ENCODE measurements at regions of chr17 and their contacts with region 1.

Region 1: DNA sequence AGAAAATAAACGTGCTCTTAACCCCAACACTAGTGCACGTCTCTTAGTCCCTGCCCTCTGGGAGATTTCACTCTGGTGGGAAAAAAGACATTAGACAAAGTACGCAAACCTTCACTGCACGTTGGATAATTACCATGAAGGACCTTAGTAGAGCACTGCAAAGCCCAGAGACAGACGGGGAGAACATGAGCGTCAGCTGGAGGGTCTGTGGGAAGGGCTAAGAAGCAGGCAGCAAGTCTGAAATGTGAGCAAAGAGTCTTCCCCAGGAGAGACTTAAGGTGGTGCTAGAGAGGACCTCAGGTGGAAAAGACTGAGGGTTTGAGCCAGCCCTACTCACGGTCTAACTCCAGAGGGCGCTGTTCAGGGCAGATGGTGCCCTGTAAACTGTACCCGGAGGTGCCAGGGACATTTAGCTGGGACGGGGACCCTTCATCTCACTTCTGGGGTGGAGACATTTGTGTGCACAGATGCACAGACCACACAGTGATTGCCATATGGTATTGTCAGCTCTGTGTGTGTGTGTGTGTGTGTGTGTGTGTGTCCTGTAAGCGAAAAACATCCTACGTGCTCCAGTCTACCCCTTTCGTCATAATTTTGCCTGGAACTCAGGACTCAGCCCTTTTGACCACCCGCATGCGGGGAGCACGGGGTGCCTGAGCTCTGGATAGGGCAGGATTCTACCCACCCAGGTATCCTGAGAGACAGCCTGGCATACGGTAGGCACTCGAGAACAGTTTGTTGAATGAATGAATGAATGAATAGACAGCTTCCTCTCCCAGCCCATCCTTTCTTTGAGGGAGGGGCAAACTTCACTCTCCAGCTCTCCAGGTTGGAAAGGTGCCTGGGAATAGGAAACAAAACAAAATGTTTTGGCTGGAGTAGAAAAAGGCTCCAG is 10.1 kb upstream of the STAC2 start:
- DNase-seq: peak; percentile 79
- ATAC-seq: peak; percentile 85
- H3K4me3 Mint-ChIP-seq: peak overlapping the region; percentile 35; the same call in 1 of the 2 replicates
- H3K27ac Mint-ChIP-seq: peak overlapping the region; percentile 80; the same call in 1 of the 2 replicates
- H3K4me1 Mint-ChIP-seq: peaks cover 25% of the 10 kb centered on the region
- H3K27me3 Mint-ChIP-seq: peaks cover 6% of the 10 kb centered on the region; the same call in 1 of the 2 replicates
- CTCF ChIP-seq: peak; percentile 94

Region 2: DNA sequence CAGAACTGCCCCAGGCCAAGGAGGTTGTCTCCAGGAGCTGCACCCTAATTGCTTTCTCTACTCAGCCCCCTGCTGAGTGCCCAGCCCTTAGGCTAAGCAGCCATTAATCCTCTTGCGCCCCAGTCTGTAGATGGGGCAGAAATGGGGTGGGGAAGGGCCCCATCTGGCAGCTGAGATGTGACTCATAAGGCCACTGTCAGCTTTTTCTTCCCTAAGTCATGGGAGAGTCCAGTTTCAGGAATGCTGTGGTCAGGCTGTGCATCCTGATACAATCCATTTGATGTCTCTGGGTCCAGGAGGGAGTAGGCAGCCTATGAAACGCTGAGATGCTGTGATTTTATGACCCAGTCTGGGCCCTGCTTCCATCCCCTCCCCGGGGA is 96.7 kb before region 1 on chr17:
- CTCF ChIA-PET with region 1: no interaction called
- POLR2A ChIA-PET with region 1: no interaction called
- DNase-seq: no peak
- ATAC-seq: no peak
- H3K4me3 Mint-ChIP-seq: no peak overlapping the region
- H3K27ac Mint-ChIP-seq: no peak overlapping the region
- H3K4me1 Mint-ChIP-seq: no peaks in the 10 kb centered on the region; the same call in 1 of the 2 replicates
- H3K27me3 Mint-ChIP-seq: no peaks in the 10 kb centered on the region; the same call in 1 of the 2 replicates
- CTCF ChIP-seq: no peak

Region 3: DNA sequence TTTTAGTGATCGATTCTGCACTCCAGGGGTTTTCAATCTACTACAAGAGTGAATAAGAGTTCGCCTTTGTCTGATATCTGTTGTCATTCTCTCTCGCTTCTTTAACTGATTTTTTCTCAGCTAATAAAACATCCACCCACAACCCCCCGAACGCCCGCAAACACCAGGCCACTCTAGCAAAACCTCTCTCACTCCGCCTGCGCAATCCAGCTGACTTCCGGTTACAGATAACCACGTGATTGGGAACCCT is 36.1 kb before region 1 on chr17:
- CTCF ChIA-PET with region 1: interaction called, 626 read pairs
- POLR2A ChIA-PET with region 1: interaction called, 5 read pairs
- DNase-seq: peak; percentile 83
- ATAC-seq: peak; percentile 25
- H3K4me3 Mint-ChIP-seq: peak overlapping the region; percentile 98
- H3K27ac Mint-ChIP-seq: peak overlapping the region; percentile 100
- H3K4me1 Mint-ChIP-seq: peaks cover 48% of the 10 kb centered on the region
- H3K27me3 Mint-ChIP-seq: no peaks in the 10 kb centered on the region; the same call in 1 of the 2 replicates
- CTCF ChIP-seq: no peak

Region 4: DNA sequence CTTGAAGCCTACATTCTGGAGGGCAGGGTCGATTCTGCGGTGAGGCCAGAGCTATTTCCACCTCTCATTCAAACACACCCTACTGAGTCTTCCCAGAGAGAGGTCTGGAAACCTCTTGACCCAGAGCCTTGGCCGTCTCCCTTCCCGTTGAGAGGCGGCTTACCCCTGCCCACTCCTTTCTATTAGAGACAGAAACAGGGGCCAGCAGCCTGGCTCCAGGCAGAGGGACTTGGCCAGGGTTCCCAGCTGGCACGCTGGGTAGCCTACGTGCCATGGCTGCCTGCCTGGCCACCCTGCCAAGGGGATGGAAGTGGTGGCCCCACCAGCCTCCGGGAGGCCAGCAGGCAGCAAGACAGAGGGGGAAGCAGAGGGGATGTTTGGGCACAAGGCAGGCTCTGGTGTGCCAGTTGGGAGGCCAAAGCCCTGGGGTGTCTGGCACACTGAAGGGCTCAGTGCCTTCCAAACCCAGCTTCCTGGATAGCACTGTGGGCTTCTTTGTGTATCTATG is 16.1 kb before region 1 on chr17:
- CTCF ChIA-PET with region 1: interaction called, 626 read pairs
- POLR2A ChIA-PET with region 1: interaction called, 6 read pairs
- DNase-seq: no peak
- ATAC-seq: no peak
- H3K4me3 Mint-ChIP-seq: no peak overlapping the region
- H3K27ac Mint-ChIP-seq: no peak overlapping the region
- H3K4me1 Mint-ChIP-seq: peaks cover 16% of the 10 kb centered on the region
- H3K27me3 Mint-ChIP-seq: peaks cover 67% of the 10 kb centered on the region
- CTCF ChIP-seq: no peak

Region 5: DNA sequence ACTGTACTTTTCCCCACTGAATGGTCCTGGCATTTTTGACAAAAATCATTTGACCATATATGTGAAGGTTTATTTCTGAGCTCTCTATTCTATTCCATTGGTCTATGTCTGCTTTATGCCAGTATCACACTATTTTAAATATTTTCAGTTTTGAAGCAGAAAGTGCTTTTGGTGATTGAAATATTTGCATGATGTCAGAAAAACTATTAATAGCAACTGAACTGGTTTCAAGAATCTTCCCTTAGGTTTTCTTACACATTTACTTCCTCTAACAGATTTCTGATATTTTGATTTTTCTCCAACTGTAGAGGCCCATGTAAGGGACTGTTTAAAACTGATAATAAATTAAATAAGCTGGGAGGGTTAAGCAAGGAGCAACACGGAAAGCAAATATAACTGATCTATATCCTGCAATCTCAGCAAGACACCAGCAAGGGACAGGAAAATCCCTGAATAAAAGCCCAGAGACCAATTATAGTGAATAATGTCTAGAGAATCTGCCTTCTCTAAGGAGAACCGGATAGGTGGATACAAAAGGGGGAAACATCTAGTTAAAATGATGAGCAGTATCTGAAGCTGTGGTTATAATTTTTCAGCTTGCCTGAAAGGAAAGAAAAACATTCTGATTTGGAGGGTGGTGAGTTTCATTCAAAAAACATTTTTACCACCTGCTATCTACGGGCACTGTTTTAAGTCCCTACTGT is 70.9 kb after region 1 on chr17:
- CTCF ChIA-PET with region 1: interaction called, 12 read pairs
- POLR2A ChIA-PET with region 1: no interaction called
- DNase-seq: no peak
- ATAC-seq: no peak
- H3K4me3 Mint-ChIP-seq: no peak overlapping the region
- H3K27ac Mint-ChIP-seq: no peak overlapping the region
- H3K4me1 Mint-ChIP-seq: peaks cover 7% of the 10 kb centered on the region; the same call in 1 of the 2 replicates
- H3K27me3 Mint-ChIP-seq: no peaks in the 10 kb centered on the region
- CTCF ChIP-seq: no peak

Region 6: GRCh38 chr17:39687811-39688518 is 452.2 kb after region 1 on chr17 and contains the start of gene PGAP3:
- CTCF ChIA-PET with region 1: no interaction called
- POLR2A ChIA-PET with region 1: no interaction called
- DNase-seq: peak; percentile 87
- ATAC-seq: peak; percentile 85
- H3K4me3 Mint-ChIP-seq: peak within 1 kb of the TSS; percentile 82
- H3K27ac Mint-ChIP-seq: peak within 1 kb of the TSS; percentile 93
- H3K4me1 Mint-ChIP-seq: peaks cover 41% of the 10 kb centered on the region
- H3K27me3 Mint-ChIP-seq: no peaks in the 10 kb centered on the region
- CTCF ChIP-seq: no peak
- total RNA-seq, gene PGAP3: 24.3 to 25.7 TPM (median 24.9 TPM) in 3 replicates